Naive thymus-derived CD4-positive, alpha-beta T cell (primary cell): ENCODE measurements at regions of chr10 and their contacts with region 1.

Region 1: GRCh38 chr10:103278862-103279298 is 1.9 kb downstream of the INA start:
- DNase-seq: peak in 7 of 9 donors; percentile 13 to 55 (median 31)
- ATAC-seq: no peak
- H3K4me3 ChIP-seq: no peak overlapping the region
- H3K4me3 Mint-ChIP-seq: peak overlapping the region; percentile 30 to 74 (median 55)
- H3K27ac ChIP-seq: no peak overlapping the region
- H3K27ac Mint-ChIP-seq: peak overlapping the region in 1 of 9 donors; percentile 67
- H3K4me1 ChIP-seq: no peaks in the 10 kb centered on the region
- H3K4me1 Mint-ChIP-seq: peaks cover 4 to 14% (median 8%) of the 10 kb centered on the region in 7 donors
- H3K27me3 ChIP-seq: peaks cover 0 to 10% of the 10 kb centered on the region in 2 donors
- H3K27me3 Mint-ChIP-seq: peaks cover 64 to 78% (median 68%) of the 10 kb centered on the region in 5 donors

Region 2: DNA sequence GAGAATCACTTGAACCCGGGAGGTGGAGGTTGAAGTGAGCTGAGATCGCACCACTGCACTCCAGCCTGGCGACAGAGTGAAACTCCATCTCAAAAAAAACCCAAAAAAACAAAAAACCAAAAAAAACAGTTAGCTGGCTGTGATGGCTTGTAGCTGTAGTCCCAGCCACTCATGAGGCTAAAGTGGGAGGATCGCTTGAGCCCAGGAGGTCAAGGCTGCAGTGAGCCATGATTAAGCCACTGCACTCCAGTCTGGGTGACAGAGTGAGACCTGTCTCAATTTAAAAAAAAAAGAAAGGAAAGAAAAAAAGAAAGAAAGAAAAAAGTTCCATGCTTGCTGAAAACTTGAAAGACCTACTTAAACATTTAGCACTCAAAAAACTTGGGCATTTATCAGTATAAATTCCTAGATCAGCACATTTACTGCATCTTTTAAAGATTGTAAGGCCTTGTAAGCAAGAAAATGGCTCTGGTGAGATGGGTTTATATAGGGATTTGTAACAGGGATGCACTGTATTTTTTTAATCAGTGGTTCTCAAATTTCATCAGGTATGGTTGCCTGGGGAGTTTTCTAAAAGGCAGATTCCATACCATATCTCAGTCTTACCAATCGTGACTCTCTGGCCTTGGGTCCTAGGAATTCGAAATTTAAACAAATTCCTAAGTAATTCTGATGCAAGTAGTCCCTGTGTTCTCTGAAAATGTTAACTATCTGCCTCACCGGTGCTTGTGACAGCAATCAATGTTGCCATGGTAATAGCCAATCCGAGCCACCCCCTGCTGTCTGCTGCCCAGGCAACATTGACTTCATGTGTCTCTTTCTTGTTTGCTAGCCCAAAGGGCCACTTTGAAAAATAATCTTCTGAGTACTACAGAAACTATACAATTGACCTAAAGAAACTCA is 74.3 kb before region 1 on chr10:
- CTCF ChIA-PET with region 1: no interaction called
- POLR2A ChIA-PET with region 1: no interaction called
- intact Hi-C with region 1: no loop called
- DNase-seq: no peak
- ATAC-seq: no peak
- H3K4me3 ChIP-seq: no peak overlapping the region
- H3K4me3 Mint-ChIP-seq: no peak overlapping the region
- H3K27ac ChIP-seq: no peak overlapping the region
- H3K27ac Mint-ChIP-seq: peak overlapping the region in 1 of 9 donors; percentile 2
- H3K4me1 ChIP-seq: no peaks in the 10 kb centered on the region
- H3K4me1 Mint-ChIP-seq: no peaks in the 10 kb centered on the region
- H3K27me3 ChIP-seq: no peaks in the 10 kb centered on the region
- H3K27me3 Mint-ChIP-seq: peaks cover 0 to 3% (median 0%) of the 10 kb centered on the region in 5 donors

Region 3: GRCh38 chr10:103265717-103266329 is 13.1 kb before region 1 on chr10:
- CTCF ChIA-PET with region 1: no interaction called
- POLR2A ChIA-PET with region 1: no interaction called
- intact Hi-C with region 1: loop called (anchors 1 to 2 kb)
- DNase-seq: peak in 6 of 9 donors; percentile 16 to 40 (median 28)
- ATAC-seq: no peak
- H3K4me3 ChIP-seq: no peak overlapping the region
- H3K4me3 Mint-ChIP-seq: no peak overlapping the region
- H3K27ac ChIP-seq: no peak overlapping the region
- H3K27ac Mint-ChIP-seq: no peak overlapping the region
- H3K4me1 ChIP-seq: no peaks in the 10 kb centered on the region
- H3K4me1 Mint-ChIP-seq: no peaks in the 10 kb centered on the region
- H3K27me3 ChIP-seq: no peaks in the 10 kb centered on the region
- H3K27me3 Mint-ChIP-seq: peaks cover 23 to 70% (median 45%) of the 10 kb centered on the region in 5 donors